GM10248 (cell line): ENCODE measurements at regions of chr5 and their contacts with region 1.

Region 1: GRCh38 chr5:172151666-172152210 is 36.3 kb downstream of the STK10 start:
- DNase-seq: no peak
- CTCF ChIP-seq: no peak

Region 2: GRCh38 chr5:172137041-172137440 is 14.7 kb before region 1 on chr5:
- CTCF ChIA-PET with region 1: no interaction called
- POLR2A ChIA-PET with region 1: no interaction called
- DNase-seq: no peak
- CTCF ChIP-seq: no peak

Region 3: GRCh38 chr5:172173831-172174153 is 22.1 kb after region 1 on chr5:
- CTCF ChIA-PET with region 1: interaction called, 11 read pairs
- POLR2A ChIA-PET with region 1: interaction called, 4 read pairs
- DNase-seq: no peak
- CTCF ChIP-seq: no peak